BJ (cell line): ENCODE measurements at regions of chr11 and their contacts with region 1.

Region 1: GRCh38 chr11:47616726-47617416 is 22.7 kb upstream of the C1QTNF4 start:
- DNase-seq: no peak
- H3K4me3 ChIP-seq: no peak overlapping the region
- H3K27me3 ChIP-seq: no peaks in the 10 kb centered on the region
- CTCF ChIP-seq: peak; percentile 98

Region 2: GRCh38 chr11:47426061-47426956 is 190.6 kb before region 1 on chr11 and contains the start of gene PSMC3:
- CTCF ChIA-PET with region 1: no interaction called
- POLR2A ChIA-PET with region 1: no interaction called
- DNase-seq: peak; percentile 64
- H3K4me3 ChIP-seq: peak within 1 kb of the TSS; percentile 82
- H3K27me3 ChIP-seq: no peaks in the 10 kb centered on the region
- CTCF ChIP-seq: no peak
- polyA plus RNA-seq, gene PSMC3: 187 and 191 TPM in 2 replicates

Region 3: GRCh38 chr11:47466701-47467250 is 150.1 kb before region 1 on chr11:
- CTCF ChIA-PET with region 1: interaction called, 13 read pairs
- POLR2A ChIA-PET with region 1: no interaction called
- DNase-seq: no peak
- H3K4me3 ChIP-seq: no peak overlapping the region
- H3K27me3 ChIP-seq: no peaks in the 10 kb centered on the region
- CTCF ChIP-seq: no peak

Region 4: GRCh38 chr11:47578524-47579460 is 38.1 kb before region 1 on chr11 and contains the starts of genes KBTBD4 and NDUFS3:
- CTCF ChIA-PET with region 1: no interaction called
- POLR2A ChIA-PET with region 1: no interaction called
- DNase-seq: no peak
- H3K4me3 ChIP-seq: peak within 1 kb of the TSS; percentile 85
- H3K27me3 ChIP-seq: no peaks in the 10 kb centered on the region
- CTCF ChIP-seq: no peak
- polyA plus RNA-seq, gene KBTBD4: 21.9 and 25.5 TPM in 2 replicates
- polyA plus RNA-seq, gene NDUFS3: 85.5 and 98.0 TPM in 2 replicates

Region 5: GRCh38 chr11:47631473-47631872 is 14.6 kb after region 1 on chr11:
- CTCF ChIA-PET with region 1: interaction called, 26 read pairs
- POLR2A ChIA-PET with region 1: no interaction called
- DNase-seq: no peak
- H3K4me3 ChIP-seq: no peak overlapping the region
- H3K27me3 ChIP-seq: no peaks in the 10 kb centered on the region
- CTCF ChIP-seq: no peak

Region 6: GRCh38 chr11:47750725-47751124 is 133.9 kb after region 1 on chr11:
- CTCF ChIA-PET with region 1: no interaction called
- POLR2A ChIA-PET with region 1: no interaction called
- DNase-seq: no peak
- H3K4me3 ChIP-seq: no peak overlapping the region
- H3K27me3 ChIP-seq: no peaks in the 10 kb centered on the region
- CTCF ChIP-seq: no peak